Activated CD4-positive, alpha-beta T cell treated with anti-CD3 and anti-CD28 coated beads, Interleukin-2, amount 10 ng/mL, durations not matched to agents 24 days and 14 days (primary cell): ENCODE measurements at regions of chr1 and their contacts with region 1.

Region 1: GRCh38 chr1:98053471-98054366 is 132.9 kb upstream of the DPYD start:
- DNase-seq: peak; percentile 89
- H3K4me3 Mint-ChIP-seq: peak overlapping the region; percentile 68
- H3K27ac Mint-ChIP-seq: no peak overlapping the region
- H3K4me1 Mint-ChIP-seq: peaks cover 19% of the 10 kb centered on the region
- H3K27me3 Mint-ChIP-seq: peaks cover 87% of the 10 kb centered on the region

Region 2: GRCh38 chr1:97137862-97138514 is 915.7 kb before region 1 on chr1:
- intact Hi-C with region 1: loop called (anchors 1 kb)
- DNase-seq: peak; percentile 71
- H3K4me3 Mint-ChIP-seq: no peak overlapping the region
- H3K27ac Mint-ChIP-seq: no peak overlapping the region
- H3K4me1 Mint-ChIP-seq: peaks cover 3% of the 10 kb centered on the region
- H3K27me3 Mint-ChIP-seq: no peaks in the 10 kb centered on the region

Region 3: DNA sequence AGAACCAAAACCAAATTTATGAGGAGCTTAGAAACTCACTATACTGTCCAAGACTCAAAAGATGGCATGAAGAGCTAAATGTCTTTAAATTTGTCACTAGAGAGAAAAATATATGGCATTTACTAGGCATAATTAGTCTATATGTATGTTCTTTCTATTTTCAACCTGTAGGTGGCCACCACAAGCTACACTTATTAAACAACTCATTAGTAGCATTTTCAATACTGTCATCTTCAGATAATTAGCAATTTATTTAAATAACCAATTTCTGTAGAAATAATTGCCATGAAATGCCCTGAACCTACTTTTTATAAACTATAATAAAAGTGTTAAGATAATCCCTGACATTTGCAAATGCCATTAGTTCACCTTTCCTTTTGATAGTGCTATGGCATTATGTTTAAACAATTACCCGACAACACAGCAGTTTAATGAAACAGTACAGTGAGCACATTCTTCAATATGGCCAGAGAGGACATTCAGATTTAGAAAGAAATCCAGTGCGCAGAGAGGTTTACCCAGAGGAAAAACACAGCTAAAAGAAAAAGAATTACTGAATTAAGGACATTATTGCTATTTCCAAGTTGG is 809.7 kb before region 1 on chr1:
- intact Hi-C with region 1: loop called (anchors 5 kb)
- DNase-seq: no peak
- H3K4me3 Mint-ChIP-seq: no peak overlapping the region
- H3K27ac Mint-ChIP-seq: no peak overlapping the region
- H3K4me1 Mint-ChIP-seq: no peaks in the 10 kb centered on the region
- H3K27me3 Mint-ChIP-seq: no peaks in the 10 kb centered on the region

Region 4: GRCh38 chr1:97820470-97821188 is 233.1 kb before region 1 on chr1:
- intact Hi-C with region 1: loop called (anchors 2 kb)
- DNase-seq: no peak
- H3K4me3 Mint-ChIP-seq: no peak overlapping the region
- H3K27ac Mint-ChIP-seq: no peak overlapping the region
- H3K4me1 Mint-ChIP-seq: no peaks in the 10 kb centered on the region
- H3K27me3 Mint-ChIP-seq: no peaks in the 10 kb centered on the region